ENCODE measurements at regions of chr18 and their contacts with region 1.

Region 1: DNA sequence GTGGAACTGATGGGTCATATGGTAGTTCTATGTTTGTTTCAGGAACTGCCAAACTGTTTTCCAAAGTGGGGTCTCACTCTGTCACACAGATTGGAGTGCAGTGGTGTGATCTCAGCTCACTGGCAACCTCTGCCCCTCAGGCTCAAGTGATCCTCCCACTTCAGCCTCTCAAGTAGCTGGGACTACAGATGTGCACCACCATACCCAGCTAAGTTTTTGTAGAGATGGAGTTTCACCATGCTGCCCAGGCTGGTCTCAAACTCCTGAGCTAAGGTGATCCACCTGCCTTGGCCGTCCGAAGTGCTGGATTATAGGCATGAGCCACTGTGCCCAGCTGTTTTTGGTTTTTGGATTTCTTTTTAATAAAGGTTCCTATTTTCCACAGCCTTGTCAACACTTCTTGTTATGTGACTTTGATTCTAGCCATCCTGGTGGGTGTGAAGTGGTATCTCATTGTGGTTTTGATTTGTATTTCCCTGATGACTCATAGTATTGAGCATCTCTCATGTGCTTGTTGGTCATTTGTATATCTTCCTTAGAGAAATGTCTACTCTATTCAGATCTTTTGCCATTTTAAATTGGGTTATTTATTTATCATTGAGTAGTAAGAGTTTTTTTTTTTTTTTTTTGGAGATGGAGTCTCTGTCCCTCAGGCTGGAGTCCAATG is 22.8 kb downstream of the NPC1 start:
- DNase-seq: no peak
- ATAC-seq: peak; percentile 51
- H3K4me3 ChIP-seq: no peak overlapping the region
- H3K27ac ChIP-seq: no peak overlapping the region
- H3K4me1 ChIP-seq: no peaks in the 10 kb centered on the region
- H3K27me3 ChIP-seq: no peaks in the 10 kb centered on the region
- CTCF ChIP-seq: no peak

Region 2: GRCh38 chr18:23756590-23757436 is 193.3 kb after region 1 on chr18:
- CTCF ChIA-PET with region 1: no interaction called
- POLR2A ChIA-PET with region 1: interaction called, 17 read pairs
- intact Hi-C with region 1: no loop called
- DNase-seq: no peak
- ATAC-seq: no peak
- H3K4me3 ChIP-seq: no peak overlapping the region
- H3K27ac ChIP-seq: no peak overlapping the region
- H3K4me1 ChIP-seq: no peaks in the 10 kb centered on the region
- H3K27me3 ChIP-seq: no peaks in the 10 kb centered on the region
- CTCF ChIP-seq: no peak